Psoas muscle (tissue), 8 donors: ENCODE measurements at regions of chr6 and their contacts with region 1.

Region 1: DNA sequence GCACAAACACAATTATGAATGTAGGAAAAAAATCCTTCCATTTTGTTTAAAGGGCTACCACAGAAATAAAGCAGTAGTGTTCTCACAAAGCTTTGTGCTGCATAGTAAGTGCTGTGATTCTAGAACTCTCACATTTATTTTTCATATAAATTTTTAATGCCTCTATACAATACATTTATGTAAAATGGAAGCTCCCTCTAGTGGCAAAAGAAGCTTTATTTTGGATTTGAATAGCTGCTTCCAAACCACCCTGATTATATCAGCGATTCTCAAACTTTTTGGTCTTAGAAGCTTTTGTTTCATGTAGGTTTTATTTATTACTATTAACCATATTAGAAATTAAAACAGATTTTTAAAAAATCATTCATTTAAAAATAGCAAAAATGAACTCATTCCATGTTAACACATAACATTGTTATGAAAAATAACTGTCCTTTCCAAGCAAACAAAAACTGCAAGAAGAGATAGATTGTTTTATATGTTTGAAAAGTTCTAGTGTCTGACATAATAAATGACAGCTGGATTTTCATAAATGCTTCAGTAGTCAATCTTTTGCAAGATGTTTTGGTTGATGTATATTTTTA is 38.4 kb downstream of the HS3ST5 start:
- DNase-seq: no peak
- ATAC-seq: peak in 1 of 4 donors; percentile 58
- H3K4me3 ChIP-seq: no peak overlapping the region
- H3K27ac ChIP-seq: no peak overlapping the region
- H3K4me1 ChIP-seq: no peaks in the 10 kb centered on the region
- H3K27me3 ChIP-seq: no peaks in the 10 kb centered on the region
- CTCF ChIP-seq: peak; percentile 46

Region 2: GRCh38 chr6:113862112-113862511 is 442.3 kb before region 1 on chr6:
- intact Hi-C with region 1: no loop called
- DNase-seq: no peak
- ATAC-seq: no peak
- H3K4me3 ChIP-seq: peak overlapping the region; percentile 96
- H3K27ac ChIP-seq: no peak overlapping the region
- H3K4me1 ChIP-seq: no peaks in the 10 kb centered on the region
- H3K27me3 ChIP-seq: no peaks in the 10 kb centered on the region
- CTCF ChIP-seq: no peak

Region 3: DNA sequence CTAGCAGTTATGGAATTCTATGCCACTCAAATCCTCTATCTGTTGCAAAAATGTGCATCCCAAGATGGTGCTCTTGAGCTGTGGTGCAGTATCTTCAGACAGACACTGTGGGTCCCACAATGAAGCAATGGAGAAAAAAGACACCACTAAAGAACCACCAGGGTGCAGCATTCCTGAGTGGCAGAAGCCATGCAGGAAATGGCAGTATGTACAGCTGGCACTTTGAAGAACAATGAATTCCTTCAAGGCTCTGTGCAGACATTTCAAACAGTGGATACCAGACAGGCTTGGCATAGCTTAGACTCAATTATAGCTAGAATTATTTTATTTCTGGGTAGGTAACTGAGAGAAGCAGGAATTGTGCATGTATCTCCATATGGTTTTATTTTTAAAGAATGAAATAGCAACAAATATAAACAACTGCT is 309.5 kb before region 1 on chr6:
- intact Hi-C with region 1: loop called in 1 of 2 experiments (anchors 5 kb)
- DNase-seq: no peak
- ATAC-seq: peak; percentile 70 to 88 (median 82)
- H3K4me3 ChIP-seq: no peak overlapping the region
- H3K27ac ChIP-seq: peak overlapping the region; percentile 34
- H3K4me1 ChIP-seq: peaks cover 25% of the 10 kb centered on the region
- H3K27me3 ChIP-seq: no peaks in the 10 kb centered on the region
- CTCF ChIP-seq: peak; percentile 41

Region 4: DNA sequence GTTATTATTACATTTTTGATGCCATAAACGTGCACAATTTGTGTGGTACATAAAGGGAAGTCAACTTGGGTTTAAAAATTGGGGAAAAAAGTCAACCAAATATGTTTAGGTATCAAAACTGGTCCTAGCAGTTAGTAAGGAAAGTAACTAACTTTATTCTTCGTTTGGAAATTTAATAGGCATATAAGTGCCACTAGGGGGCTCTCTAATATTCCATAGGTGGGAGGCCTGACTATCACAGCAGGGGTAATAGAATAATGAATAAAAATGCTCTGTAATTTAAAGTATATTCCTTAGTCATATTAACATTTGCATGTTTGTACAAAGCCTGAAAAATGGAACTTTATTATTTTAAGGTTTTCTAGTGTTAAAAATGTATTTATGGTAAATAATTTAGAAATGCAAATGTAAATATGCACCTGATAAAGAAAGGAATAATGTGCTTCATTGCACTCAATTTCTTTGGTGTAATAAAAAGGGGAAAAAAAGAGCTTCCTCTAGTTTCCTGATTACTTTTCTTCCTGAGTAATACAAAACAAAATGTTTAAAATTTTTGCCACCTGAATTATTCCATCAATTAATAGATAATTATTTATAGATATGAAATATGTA is 207.7 kb before region 1 on chr6:
- intact Hi-C with region 1: loop called (anchors 5 kb)
- DNase-seq: no peak
- ATAC-seq: peak in 3 of 4 donors; percentile 50 to 58 (median 53)
- H3K4me3 ChIP-seq: no peak overlapping the region
- H3K27ac ChIP-seq: no peak overlapping the region
- H3K4me1 ChIP-seq: no peaks in the 10 kb centered on the region
- H3K27me3 ChIP-seq: no peaks in the 10 kb centered on the region
- CTCF ChIP-seq: peak; percentile 79

Region 5: DNA sequence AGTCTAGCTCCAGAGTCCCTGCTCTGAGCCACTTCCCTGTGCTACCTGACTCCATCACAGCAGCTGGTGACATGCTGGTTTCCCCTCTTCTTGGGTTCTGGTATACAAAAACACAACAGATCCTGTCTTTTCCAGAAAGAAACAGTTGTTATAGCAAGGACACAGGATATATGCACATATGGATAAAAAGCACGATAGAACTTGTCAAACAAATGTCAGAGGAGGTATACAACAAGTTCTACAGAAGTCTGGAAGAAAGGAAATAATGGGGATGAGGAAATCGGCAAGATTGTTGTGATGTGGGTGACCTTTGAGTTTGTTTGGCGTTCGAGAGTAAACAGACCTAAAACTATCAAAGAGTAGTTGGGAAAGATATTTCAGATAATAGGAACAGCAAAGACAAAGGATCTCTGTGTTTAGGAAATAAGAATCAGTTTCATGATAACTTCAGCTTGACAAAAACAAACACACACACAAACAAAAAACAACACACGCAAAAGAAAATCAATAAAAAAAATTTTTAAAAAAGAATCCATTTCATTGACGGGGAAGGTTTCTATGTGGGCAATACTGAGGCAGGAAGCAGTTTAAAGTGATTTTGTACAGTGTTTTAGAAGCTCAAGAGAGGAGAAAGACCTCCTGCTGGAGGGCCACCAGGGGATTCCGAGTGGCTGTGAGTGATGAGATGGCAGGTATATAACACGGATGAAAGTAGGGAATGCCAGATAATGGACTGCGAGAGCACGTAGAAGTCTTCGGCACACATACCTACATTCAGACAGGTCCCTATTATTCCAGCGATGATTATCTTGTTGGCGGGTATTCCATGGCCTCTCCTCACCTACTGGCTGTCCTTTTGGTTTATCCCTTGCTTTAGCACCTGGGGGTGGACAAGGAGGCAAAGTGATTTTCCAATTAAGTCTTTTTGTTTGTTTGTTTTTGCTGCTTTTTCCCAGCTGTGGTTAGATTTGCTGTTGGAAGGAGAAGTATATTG is 136.5 kb before region 1 on chr6:
- intact Hi-C with region 1: loop called (anchors 5 to 10 kb)
- DNase-seq: no peak
- ATAC-seq: no peak
- H3K4me3 ChIP-seq: no peak overlapping the region
- H3K27ac ChIP-seq: no peak overlapping the region
- H3K4me1 ChIP-seq: no peaks in the 10 kb centered on the region
- H3K27me3 ChIP-seq: no peaks in the 10 kb centered on the region
- CTCF ChIP-seq: no peak